Activated T-helper 2 cell treated with anti-CD3 and anti-CD28 coated beads, Interferon-gamma antibody, Interleukin-2, Interleukin-4, amounts not matched to agents 10 μg/mL and 5 μg/mL and 100 μg/mL, durations not matched to agents 14 hours and 24 hours and 36 hours (primary cell): ENCODE measurements at regions of chr2 and their contacts with region 1.

Region 1: DNA sequence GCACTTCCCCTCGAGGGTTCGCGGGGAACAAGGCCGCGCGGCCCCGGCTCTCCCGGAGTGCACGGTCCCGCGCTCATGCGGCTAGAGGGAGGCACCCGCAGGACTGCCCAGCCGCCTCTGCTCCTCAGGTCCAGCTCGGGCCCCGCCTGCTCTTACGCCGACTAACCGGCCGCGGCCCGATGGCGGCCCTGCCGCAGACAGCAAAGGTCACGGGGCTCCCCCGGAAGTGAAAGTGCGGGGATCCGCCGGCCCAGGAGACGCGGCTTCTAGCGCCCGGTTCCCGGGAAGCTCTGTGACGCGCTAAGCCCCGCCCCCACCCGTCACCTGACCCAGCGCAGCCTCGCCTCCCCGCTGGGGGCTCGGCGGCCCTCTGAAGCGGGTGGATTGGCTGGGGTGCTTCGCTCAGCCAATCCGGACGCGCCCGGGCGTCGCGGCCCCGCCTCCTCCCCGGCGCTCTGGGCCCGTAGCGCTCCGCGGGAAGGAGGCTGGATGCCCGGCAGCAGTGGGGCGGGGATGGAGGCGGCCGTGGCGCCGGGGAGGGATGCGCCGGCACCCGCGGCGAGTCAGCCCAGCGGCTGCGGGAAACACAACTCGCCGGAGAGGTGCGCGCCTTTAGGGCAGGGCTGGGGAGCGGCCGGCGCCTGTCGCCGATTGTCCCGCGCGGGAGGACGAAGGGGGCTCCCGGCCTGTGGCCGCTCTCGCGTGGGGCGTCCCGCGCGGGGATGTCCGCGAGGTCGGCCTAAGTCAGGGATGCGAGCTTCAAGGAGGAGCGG is at the start of gene SCLY:
- DNase-seq: peak; percentile 94
- H3K4me3 Mint-ChIP-seq: peak within 1 kb of the TSS; percentile 89
- H3K27ac Mint-ChIP-seq: peak within 1 kb of the TSS; percentile 92
- H3K4me1 Mint-ChIP-seq: peaks cover 56% of the 10 kb centered on the region
- H3K27me3 Mint-ChIP-seq: peaks cover 2% of the 10 kb centered on the region
- total RNA-seq, gene SCLY: 98.6 and 102 TPM in 2 replicates

Region 2: GRCh38 chr2:237434866-237435311 is 625.8 kb before region 1 on chr2:
- intact Hi-C with region 1: loop called (anchors 10 kb)
- DNase-seq: peak; percentile 69
- H3K4me3 Mint-ChIP-seq: peak overlapping the region; percentile 72
- H3K27ac Mint-ChIP-seq: peak overlapping the region; percentile 86
- H3K4me1 Mint-ChIP-seq: peaks cover 81% of the 10 kb centered on the region
- H3K27me3 Mint-ChIP-seq: no peaks in the 10 kb centered on the region

Region 3: GRCh38 chr2:237904801-237905599 is 155.7 kb before region 1 on chr2:
- intact Hi-C with region 1: loop called (anchors 2 kb)
- DNase-seq: no peak
- H3K4me3 Mint-ChIP-seq: no peak overlapping the region
- H3K27ac Mint-ChIP-seq: peak overlapping the region; percentile 90
- H3K4me1 Mint-ChIP-seq: peaks cover 31% of the 10 kb centered on the region
- H3K27me3 Mint-ChIP-seq: no peaks in the 10 kb centered on the region

Region 4: GRCh38 chr2:237966565-237967462 is 93.9 kb before region 1 on chr2 and contains the start of gene UBE2F:
- intact Hi-C with region 1: loop called (anchors 1 kb)
- DNase-seq: peak; percentile 97
- H3K4me3 Mint-ChIP-seq: peak within 1 kb of the TSS; percentile 89
- H3K27ac Mint-ChIP-seq: peak within 1 kb of the TSS; percentile 78
- H3K4me1 Mint-ChIP-seq: peaks cover 34% of the 10 kb centered on the region
- H3K27me3 Mint-ChIP-seq: no peaks in the 10 kb centered on the region
- total RNA-seq, gene UBE2F: 137 and 146 TPM in 2 replicates

Region 5: DNA sequence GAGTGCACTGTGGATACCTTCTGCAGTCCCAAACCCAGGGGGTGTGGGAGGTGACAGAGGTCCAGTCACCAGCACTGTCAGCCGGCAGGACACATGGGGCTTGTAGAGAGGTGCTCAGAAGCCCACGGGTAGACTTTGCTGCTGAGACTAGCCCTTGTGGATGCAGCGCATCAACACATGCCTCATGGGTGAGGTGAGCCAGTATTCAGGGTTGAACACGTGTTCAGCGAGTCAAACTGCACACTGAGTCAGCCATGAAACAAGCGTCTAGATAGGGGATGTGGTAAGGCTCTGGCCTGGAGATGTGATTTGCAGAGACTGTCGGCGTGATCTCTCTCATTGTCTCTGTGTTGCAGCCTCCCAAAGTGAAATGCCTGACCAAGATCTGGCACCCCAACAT is 35.7 kb before region 1 on chr2:
- intact Hi-C with region 1: loop called (anchors 5 kb)
- DNase-seq: peak; percentile 33
- H3K4me3 Mint-ChIP-seq: peak overlapping the region; percentile 66
- H3K27ac Mint-ChIP-seq: peak overlapping the region; percentile 86
- H3K4me1 Mint-ChIP-seq: peaks cover 38% of the 10 kb centered on the region
- H3K27me3 Mint-ChIP-seq: no peaks in the 10 kb centered on the region